BJ (cell line): ENCODE measurements at regions of chr12 and their contacts with region 1.

Region 1: GRCh38 chr12:80936498-80937390 is 990 bp downstream of the LIN7A start:
- DNase-seq: no peak
- H3K4me3 ChIP-seq: peak overlapping the region; percentile 84
- H3K27me3 ChIP-seq: no peaks in the 10 kb centered on the region
- CTCF ChIP-seq: no peak

Region 2: DNA sequence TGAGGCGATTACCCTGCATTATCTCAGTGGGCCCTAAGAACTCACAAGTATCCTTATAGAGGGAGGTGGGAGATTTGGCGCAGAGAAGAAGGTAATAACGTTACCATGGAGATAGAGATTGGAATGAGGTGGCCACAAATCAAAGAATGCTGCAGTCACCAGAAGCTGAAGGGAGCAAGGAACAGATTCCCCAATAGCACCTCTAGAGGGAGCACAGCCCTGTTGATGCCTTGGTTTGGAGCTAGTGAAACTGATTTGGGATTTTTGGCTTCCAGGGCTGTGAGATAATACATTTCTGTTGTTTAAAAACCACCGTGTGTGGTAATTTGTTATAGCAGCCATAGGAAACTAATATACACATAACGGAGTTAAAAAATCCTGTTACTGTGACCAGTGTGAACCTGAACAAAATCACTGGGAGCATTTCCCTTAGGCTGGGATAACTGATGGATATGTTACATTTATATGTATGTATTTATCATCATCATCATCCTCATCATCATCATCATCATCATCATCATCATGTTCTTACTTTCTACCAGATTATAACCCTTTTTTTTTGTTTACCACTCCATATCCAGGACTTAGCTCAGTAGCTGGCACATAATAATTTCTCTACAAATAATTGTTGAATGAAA is 99.3 kb before region 1 on chr12:
- CTCF ChIA-PET with region 1: interaction called, 20 read pairs
- POLR2A ChIA-PET with region 1: no interaction called
- DNase-seq: no peak
- H3K4me3 ChIP-seq: no peak overlapping the region
- H3K27me3 ChIP-seq: no peaks in the 10 kb centered on the region
- CTCF ChIP-seq: peak; percentile 87

Region 3: DNA sequence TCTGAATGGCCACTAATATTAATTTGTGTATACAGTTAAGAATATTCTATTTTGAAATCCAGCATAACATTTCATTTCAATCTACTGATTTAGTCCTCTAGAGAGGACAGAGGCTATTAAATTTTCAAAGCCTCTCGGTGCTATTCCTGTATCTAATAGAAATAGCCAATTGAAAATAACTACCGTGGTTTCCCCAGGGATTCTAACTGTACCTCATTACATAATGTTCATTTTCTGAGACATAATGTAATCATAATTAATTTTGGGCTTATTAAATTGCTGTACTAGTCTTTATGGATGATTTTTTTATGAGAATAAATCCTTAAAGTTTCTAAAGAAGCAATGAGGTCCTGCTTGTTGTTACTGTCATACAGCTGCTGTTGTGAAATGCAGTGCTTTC is 102.5 kb after region 1 on chr12:
- CTCF ChIA-PET with region 1: no interaction called
- POLR2A ChIA-PET with region 1: no interaction called
- DNase-seq: no peak
- H3K4me3 ChIP-seq: no peak overlapping the region
- H3K27me3 ChIP-seq: no peaks in the 10 kb centered on the region
- CTCF ChIP-seq: no peak